Ascending aorta (tissue), 2 donors: ENCODE measurements at regions of chr9 and their contacts with region 1.

Region 1: DNA sequence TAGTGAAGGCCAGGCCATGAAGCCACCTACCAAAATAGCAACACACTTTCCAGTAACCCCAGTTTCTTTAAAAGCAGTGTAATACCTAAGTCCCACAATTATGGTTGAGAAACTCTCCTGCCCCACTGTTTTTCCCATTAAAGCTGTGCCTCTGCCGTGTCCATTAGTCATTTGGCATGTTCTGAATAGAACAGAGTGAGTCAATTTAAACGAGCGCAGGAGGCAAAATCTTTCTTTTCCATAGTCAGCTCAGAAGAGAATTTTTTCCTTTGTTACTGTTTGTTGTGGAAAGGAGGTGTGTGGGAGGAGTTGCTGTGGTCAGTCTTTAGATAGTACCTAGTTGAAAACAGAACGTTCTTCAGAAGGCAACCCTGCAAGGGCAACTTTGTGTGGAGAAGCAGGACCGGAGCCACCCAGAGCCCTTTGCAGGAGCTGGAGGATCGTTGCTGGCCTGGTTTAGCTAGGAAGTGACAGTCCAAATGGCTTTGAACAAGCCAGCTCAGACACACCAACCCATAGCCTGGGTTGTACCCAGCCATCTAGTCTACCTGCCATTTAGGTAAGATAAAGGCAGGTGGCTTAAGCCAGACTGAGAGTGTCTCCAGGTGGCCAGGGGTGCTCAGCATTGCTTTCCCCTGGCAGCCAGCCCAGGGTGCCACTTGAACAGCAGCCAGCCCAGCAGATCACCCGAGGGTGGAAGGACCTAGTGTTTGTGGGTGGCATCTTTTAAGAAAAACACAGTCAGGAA is 30.4 kb downstream of the GADD45G start:
- DNase-seq: no peak
- H3K4me3 ChIP-seq: peak overlapping the region in 1 of 2 donors; percentile 3
- H3K27ac ChIP-seq: peak overlapping the region; percentile 26 to 64
- H3K4me1 ChIP-seq: peaks cover 11 to 27% of the 10 kb centered on the region in 2 donors
- H3K27me3 ChIP-seq: no peaks in the 10 kb centered on the region
- CTCF ChIP-seq: no peak

Region 2: GRCh38 chr9:89684901-89685636 is 49.9 kb after region 1 on chr9:
- intact Hi-C with region 1: loop called (anchors 2 kb)
- DNase-seq: peak; percentile 61 to 83
- H3K4me3 ChIP-seq: no peak overlapping the region
- H3K27ac ChIP-seq: peak overlapping the region; percentile 65 to 81
- H3K4me1 ChIP-seq: peaks cover 7 to 24% of the 10 kb centered on the region in 2 donors
- H3K27me3 ChIP-seq: no peaks in the 10 kb centered on the region
- CTCF ChIP-seq: peak in 1 of 3 experiments; percentile 18

Region 3: GRCh38 chr9:89999534-90000370 is 364.6 kb after region 1 on chr9:
- intact Hi-C with region 1: loop called (anchors 10 kb)
- DNase-seq: peak in 1 of 2 donors; percentile 82
- H3K4me3 ChIP-seq: peak overlapping the region; percentile 43 to 61
- H3K27ac ChIP-seq: peak overlapping the region; percentile 78 to 80
- H3K4me1 ChIP-seq: peaks cover 24 to 37% of the 10 kb centered on the region in 2 donors
- H3K27me3 ChIP-seq: no peaks in the 10 kb centered on the region
- CTCF ChIP-seq: no peak